Activated naive CD4-positive, alpha-beta T cell treated with anti-CD3 and anti-CD28 coated beads for 36 hours (primary cell): ENCODE measurements at regions of chr15 and their contacts with region 1.

Region 1: GRCh38 chr15:90400406-90401314 is 12.6 kb downstream of the IQGAP1 start:
- DNase-seq: peak; percentile 74
- H3K4me3 Mint-ChIP-seq: peak overlapping the region; percentile 59
- H3K27ac Mint-ChIP-seq: peak overlapping the region; percentile 91
- H3K4me1 Mint-ChIP-seq: peaks cover 62% of the 10 kb centered on the region
- H3K27me3 Mint-ChIP-seq: no peaks in the 10 kb centered on the region

Region 2: DNA sequence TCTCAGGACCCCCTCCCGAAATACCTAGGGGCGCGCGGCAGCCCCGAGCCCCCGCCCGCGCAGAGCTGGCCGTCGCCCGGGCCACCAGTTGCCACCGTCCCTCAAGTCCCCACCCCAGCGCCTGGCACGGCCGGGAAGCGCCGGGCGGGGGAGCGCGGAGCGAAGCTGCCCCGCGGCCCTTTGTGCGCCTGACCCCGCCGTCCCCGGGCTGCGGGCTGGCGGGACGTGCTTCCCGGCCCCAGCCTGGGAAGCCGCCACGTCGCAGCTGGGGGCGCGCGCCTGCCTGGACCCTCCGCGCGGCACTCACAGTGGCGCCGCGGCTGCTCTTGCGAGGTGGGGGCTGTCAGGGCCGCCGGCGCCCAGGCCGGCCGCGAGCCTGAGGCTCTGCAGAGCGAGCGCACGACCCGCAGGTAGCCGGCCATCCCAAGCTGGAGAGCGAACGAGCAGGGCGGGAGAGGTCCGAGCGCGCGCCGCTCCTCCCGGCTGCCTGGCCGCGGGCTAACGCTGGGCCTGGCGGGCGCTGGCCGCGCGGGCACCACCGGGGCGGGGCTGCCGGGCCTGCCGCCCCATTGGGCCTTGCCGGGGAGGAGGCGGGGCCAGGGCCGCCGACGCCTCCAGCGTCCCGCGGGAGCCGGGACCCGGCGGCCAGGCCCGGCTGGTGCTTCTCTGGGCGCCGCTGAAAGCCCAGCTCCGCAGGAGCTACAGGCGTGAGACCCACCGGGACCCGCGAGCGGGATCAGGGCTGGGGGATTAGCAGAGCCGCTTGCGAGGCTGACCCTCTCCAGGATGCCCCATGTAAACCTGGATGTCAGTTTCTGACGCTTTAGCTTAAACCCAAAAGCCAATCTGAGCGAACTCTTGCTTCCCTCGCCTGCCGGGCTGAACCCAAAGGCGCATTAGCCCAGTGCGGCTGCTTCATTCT is 298.4 kb before region 1 on chr15 and contains the start of gene IDH2:
- CTCF ChIA-PET with region 1: no interaction called
- intact Hi-C with region 1: loop called (anchors 5 kb)
- DNase-seq: peak; percentile 64
- H3K4me3 Mint-ChIP-seq: peak within 1 kb of the TSS; percentile 91
- H3K27ac Mint-ChIP-seq: peak within 1 kb of the TSS; percentile 90
- H3K4me1 Mint-ChIP-seq: peaks cover 46% of the 10 kb centered on the region
- H3K27me3 Mint-ChIP-seq: no peaks in the 10 kb centered on the region
- total RNA-seq, gene IDH2: 225 to 229 TPM

Region 3: GRCh38 chr15:90320061-90320884 is 80.4 kb before region 1 on chr15:
- CTCF ChIA-PET with region 1: no interaction called
- intact Hi-C with region 1: no loop called
- DNase-seq: peak; percentile 75
- H3K4me3 Mint-ChIP-seq: no peak overlapping the region
- H3K27ac Mint-ChIP-seq: no peak overlapping the region
- H3K4me1 Mint-ChIP-seq: peaks cover 4% of the 10 kb centered on the region
- H3K27me3 Mint-ChIP-seq: no peaks in the 10 kb centered on the region

Region 4: GRCh38 chr15:90387537-90388461 is 12.9 kb before region 1 on chr15 and contains the start of gene IQGAP1:
- CTCF ChIA-PET with region 1: interaction called, 5 read pairs
- intact Hi-C with region 1: loop called (anchors 1 kb)
- DNase-seq: peak; percentile 99
- H3K4me3 Mint-ChIP-seq: peak within 1 kb of the TSS; percentile 89
- H3K27ac Mint-ChIP-seq: peak within 1 kb of the TSS; percentile 90
- H3K4me1 Mint-ChIP-seq: peaks cover 39% of the 10 kb centered on the region
- H3K27me3 Mint-ChIP-seq: no peaks in the 10 kb centered on the region
- total RNA-seq, gene IQGAP1: 136 to 143 TPM

Region 5: GRCh38 chr15:90412356-90413194 is 11.9 kb after region 1 on chr15:
- CTCF ChIA-PET with region 1: interaction called, 4 read pairs
- intact Hi-C with region 1: loop called (anchors 1 kb)
- DNase-seq: no peak
- H3K4me3 Mint-ChIP-seq: no peak overlapping the region
- H3K27ac Mint-ChIP-seq: no peak overlapping the region
- H3K4me1 Mint-ChIP-seq: peaks cover 73% of the 10 kb centered on the region
- H3K27me3 Mint-ChIP-seq: no peaks in the 10 kb centered on the region

Region 6: GRCh38 chr15:90419738-90420406 is 19.2 kb after region 1 on chr15:
- CTCF ChIA-PET with region 1: interaction called, 3 read pairs
- intact Hi-C with region 1: loop called (anchors 1 kb)
- DNase-seq: peak; percentile 73
- H3K4me3 Mint-ChIP-seq: peak overlapping the region; percentile 33
- H3K27ac Mint-ChIP-seq: peak overlapping the region; percentile 87
- H3K4me1 Mint-ChIP-seq: peaks cover 77% of the 10 kb centered on the region
- H3K27me3 Mint-ChIP-seq: no peaks in the 10 kb centered on the region

Region 7: GRCh38 chr15:90677807-90678790 is 277.4 kb after region 1 on chr15:
- CTCF ChIA-PET with region 1: no interaction called
- intact Hi-C with region 1: loop called (anchors 5 kb)
- DNase-seq: peak; percentile 52
- H3K4me3 Mint-ChIP-seq: peak overlapping the region; percentile 30
- H3K27ac Mint-ChIP-seq: peak overlapping the region; percentile 78
- H3K4me1 Mint-ChIP-seq: peaks cover 36% of the 10 kb centered on the region
- H3K27me3 Mint-ChIP-seq: no peaks in the 10 kb centered on the region

Region 8: DNA sequence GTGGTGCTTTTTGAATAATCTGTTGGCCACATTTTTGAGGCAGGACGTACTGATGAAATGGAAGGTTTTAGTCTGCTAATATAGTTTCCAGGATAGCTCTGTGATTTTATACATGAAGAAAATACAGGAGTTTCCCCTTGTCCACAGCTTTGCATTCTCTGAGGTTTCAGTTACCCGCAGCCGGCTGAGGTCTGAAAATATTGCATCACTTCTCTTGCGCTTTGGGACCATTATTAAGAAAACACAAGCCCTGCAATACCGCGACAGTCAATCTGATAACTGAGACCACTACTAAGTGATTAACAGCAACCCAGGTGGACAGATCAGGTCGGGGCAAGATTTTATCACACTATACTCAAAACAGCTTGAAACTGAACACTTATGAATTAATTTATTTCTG is 349.5 kb after region 1 on chr15:
- CTCF ChIA-PET with region 1: no interaction called
- intact Hi-C with region 1: no loop called
- DNase-seq: peak; percentile 38
- H3K4me3 Mint-ChIP-seq: peak overlapping the region; percentile 21
- H3K27ac Mint-ChIP-seq: peak overlapping the region; percentile 84
- H3K4me1 Mint-ChIP-seq: peaks cover 29% of the 10 kb centered on the region
- H3K27me3 Mint-ChIP-seq: no peaks in the 10 kb centered on the region